Adrenal gland (tissue), 19 donors: ENCODE measurements at regions of chr1 and their contacts with region 1.

Region 1: GRCh38 chr1:150532868-150533302 is 16.3 kb upstream of the ADAMTSL4 start:
- DNase-seq: peak in 2 of 7 donors; percentile 44 to 48
- H3K4me3 ChIP-seq: no peak overlapping the region
- H3K27ac ChIP-seq: peak overlapping the region in 2 of 5 donors; percentile 26 to 48
- H3K4me1 ChIP-seq: peaks cover 0 to 10% of the 10 kb centered on the region in 2 donors
- H3K27me3 ChIP-seq: no peaks in the 10 kb centered on the region
- CTCF ChIP-seq: peak in 1 of 6 experiments; percentile 12
- POLR2A ChIP-seq: no peak

Region 2: DNA sequence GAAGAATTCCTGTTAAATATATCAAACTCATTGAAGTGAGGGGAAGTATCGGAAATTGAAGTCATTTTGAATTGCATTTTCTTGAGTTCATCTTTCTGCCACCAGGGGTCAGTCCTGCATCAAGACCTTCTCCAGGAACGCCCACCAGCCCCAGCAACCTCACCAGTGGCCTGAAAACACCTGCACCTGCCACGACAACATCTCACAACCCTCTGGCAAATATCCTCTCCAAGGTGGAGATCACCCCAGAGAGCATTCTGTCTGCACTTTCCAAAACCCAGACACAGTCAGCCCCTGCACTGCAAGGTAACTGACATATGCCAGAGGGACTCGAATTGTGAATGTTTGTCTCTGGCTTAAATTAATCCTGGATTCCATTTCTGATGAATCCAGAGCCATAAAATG is 68.5 kb before region 1 on chr1:
- intact Hi-C with region 1: loop called (anchors 5 kb)
- DNase-seq: peak; percentile 42 to 74 (median 63)
- H3K4me3 ChIP-seq: no peak overlapping the region
- H3K27ac ChIP-seq: no peak overlapping the region
- H3K4me1 ChIP-seq: peaks cover 5 to 7% of the 10 kb centered on the region in 2 donors
- H3K27me3 ChIP-seq: no peaks in the 10 kb centered on the region
- CTCF ChIP-seq: peak; percentile 64 to 86 (median 80)
- POLR2A ChIP-seq: no peak

Region 3: GRCh38 chr1:150507905-150508854 is 24.7 kb before region 1 on chr1 and contains the start of gene ECM1:
- intact Hi-C with region 1: no loop called
- DNase-seq: peak; percentile 52 to 83 (median 76)
- H3K4me3 ChIP-seq: peak within 1 kb of the TSS in 1 of 4 donors; percentile 3
- H3K27ac ChIP-seq: peak within 1 kb of the TSS in 4 of 5 donors; percentile 30 to 87 (median 62)
- H3K4me1 ChIP-seq: peaks cover 3 to 16% of the 10 kb centered on the region in 2 donors
- H3K27me3 ChIP-seq: no peaks in the 10 kb centered on the region
- CTCF ChIP-seq: no peak
- POLR2A ChIP-seq: peak in 1 of 2 donors; percentile 47
- total RNA-seq, gene ECM1: 5.4 to 63.0 (median 19.8) TPM

Region 4: DNA sequence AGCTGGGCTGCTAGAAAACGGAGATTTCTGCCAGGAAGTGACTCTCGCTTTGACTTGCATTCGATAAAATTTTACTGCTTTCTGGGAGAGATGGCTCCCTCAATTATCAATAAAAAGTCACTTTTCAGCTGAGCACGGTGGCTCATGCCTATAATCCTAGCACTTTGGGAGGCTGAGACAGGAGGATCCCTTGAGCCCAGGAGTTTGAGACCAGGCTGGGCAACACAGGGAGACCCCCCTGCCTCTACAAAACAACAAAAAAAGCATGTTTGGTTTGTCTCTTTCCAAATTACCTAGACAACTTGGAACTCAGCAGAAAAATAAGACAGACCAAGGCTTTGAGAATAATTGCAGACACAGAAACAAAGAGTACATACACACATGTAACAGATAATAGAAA is 109.4 kb after region 1 on chr1:
- intact Hi-C with region 1: no loop called
- DNase-seq: no peak
- H3K4me3 ChIP-seq: no peak overlapping the region
- H3K27ac ChIP-seq: no peak overlapping the region
- H3K4me1 ChIP-seq: no peaks in the 10 kb centered on the region
- H3K27me3 ChIP-seq: no peaks in the 10 kb centered on the region
- CTCF ChIP-seq: no peak
- POLR2A ChIP-seq: no peak

Region 5: GRCh38 chr1:150813058-150813707 is 280.3 kb after region 1 on chr1:
- intact Hi-C with region 1: no loop called
- DNase-seq: peak; percentile 55 to 81 (median 67)
- H3K4me3 ChIP-seq: no peak overlapping the region
- H3K27ac ChIP-seq: no peak overlapping the region
- H3K4me1 ChIP-seq: peaks cover 0 to 7% of the 10 kb centered on the region in 2 donors
- H3K27me3 ChIP-seq: no peaks in the 10 kb centered on the region
- CTCF ChIP-seq: peak; percentile 42 to 68 (median 63)
- POLR2A ChIP-seq: no peak